Posterior vena cava (tissue), 2 donors: ENCODE measurements at regions of chr1 and their contacts with region 1.

Region 1: DNA sequence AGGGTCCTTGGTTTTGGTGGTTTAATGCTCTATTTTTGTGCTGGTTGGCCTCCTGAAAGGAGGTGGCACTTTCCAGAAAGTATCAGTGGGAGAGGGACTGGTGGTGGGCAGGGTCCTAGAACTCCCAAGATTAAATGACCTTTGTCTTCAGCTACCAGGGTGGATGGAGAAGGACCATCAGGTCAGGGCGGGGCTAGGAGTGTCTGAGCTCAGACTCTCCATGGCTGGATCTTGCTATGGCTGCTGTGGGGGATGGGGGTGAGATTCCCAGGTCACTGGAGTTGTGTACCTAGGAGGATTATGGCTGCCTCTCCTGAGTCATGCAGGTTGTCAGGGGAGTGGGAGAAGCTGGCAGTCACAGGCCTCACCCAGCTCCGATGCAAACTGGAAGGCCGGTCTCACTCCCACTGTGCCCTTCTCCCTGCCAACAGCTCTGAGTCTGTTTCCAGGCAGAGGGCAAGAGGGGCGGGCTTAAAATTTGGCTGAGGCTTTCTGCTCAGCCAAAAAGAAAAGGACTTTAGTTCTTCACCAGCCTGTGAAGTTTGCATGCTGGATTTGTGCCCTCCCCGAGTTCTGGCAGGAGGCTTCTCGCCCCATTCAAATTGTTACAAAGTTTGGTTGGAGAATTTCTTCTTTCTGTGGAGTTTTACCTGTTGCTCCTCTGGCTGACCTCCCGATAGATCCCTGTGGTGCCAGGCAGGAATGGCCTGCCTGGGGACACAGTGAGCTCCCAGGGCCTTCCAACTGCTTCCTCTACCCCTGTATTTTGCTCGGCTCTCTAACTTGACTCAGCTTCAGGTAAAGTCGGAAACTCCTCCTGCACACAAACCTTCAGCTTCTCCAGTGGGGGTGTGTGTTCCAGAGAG is 13.1 kb upstream of the KYAT3 start:
- DNase-seq: no peak

Region 2: GRCh38 chr1:89472952-89473351 is 467.4 kb after region 1 on chr1:
- intact Hi-C with region 1: loop called in 1 of 2 experiments (anchors 5 kb)
- DNase-seq: no peak